MCF 10A (cell line): ENCODE measurements at regions of chr1 and their contacts with region 1.

Region 1: GRCh38 chr1:35790670-35791069 is 17.1 kb upstream of the AGO4 start:
- DNase-seq: no peak
- H3K4me3 Mint-ChIP-seq: no peak overlapping the region
- H3K27ac Mint-ChIP-seq: no peak overlapping the region
- H3K4me1 Mint-ChIP-seq: no peaks in the 10 kb centered on the region
- H3K27me3 Mint-ChIP-seq: no peaks in the 10 kb centered on the region
- CTCF ChIP-seq: no peak

Region 2: DNA sequence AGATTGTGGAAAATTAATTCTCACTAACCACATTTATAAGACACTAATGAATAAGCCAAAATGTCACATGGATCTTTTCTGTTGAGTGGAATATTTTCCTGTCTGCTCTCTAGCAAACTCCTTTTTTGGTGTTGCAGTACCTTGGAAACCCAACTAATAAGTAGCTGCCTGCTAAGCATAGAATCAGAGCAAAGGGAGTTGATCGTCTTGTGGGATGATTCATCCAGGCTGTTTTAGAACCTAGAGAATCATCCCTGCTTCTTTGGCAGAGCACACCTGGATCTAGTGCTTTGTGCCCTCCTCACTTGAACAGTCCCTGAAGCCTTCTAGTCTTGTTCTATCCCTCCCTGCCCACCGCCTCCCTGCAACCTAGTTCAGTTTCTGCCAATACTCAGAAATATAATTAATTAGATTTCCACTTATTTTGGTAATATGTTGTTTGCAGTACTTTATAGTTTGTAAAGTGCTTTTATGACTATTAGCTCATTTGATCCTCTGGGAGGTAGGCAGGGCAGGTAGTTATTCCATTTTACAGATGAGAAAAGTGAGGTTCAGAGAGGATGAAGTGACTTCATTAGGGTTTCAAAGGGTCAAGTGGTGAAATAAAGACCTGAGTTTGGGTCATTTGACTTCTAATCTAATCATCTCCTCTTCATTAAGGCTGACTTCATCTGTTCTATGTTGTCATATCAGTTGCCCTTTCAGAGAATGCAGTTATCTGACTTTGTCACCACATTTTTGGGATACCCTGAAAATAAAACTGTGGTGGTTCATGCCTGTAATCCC is 19.6 kb after region 1 on chr1:
- CTCF ChIA-PET with region 1: no interaction called
- POLR2A ChIA-PET with region 1: no interaction called
- intact Hi-C with region 1: loop called (anchors 1 kb)
- DNase-seq: peak; percentile 37
- H3K4me3 Mint-ChIP-seq: peak overlapping the region; percentile 82
- H3K27ac Mint-ChIP-seq: peak overlapping the region; percentile 88
- H3K4me1 Mint-ChIP-seq: peaks cover 17% of the 10 kb centered on the region
- H3K27me3 Mint-ChIP-seq: no peaks in the 10 kb centered on the region
- CTCF ChIP-seq: no peak